K562 (cell line): ENCODE measurements at regions of chr6 and their contacts with region 1.

Region 1: DNA sequence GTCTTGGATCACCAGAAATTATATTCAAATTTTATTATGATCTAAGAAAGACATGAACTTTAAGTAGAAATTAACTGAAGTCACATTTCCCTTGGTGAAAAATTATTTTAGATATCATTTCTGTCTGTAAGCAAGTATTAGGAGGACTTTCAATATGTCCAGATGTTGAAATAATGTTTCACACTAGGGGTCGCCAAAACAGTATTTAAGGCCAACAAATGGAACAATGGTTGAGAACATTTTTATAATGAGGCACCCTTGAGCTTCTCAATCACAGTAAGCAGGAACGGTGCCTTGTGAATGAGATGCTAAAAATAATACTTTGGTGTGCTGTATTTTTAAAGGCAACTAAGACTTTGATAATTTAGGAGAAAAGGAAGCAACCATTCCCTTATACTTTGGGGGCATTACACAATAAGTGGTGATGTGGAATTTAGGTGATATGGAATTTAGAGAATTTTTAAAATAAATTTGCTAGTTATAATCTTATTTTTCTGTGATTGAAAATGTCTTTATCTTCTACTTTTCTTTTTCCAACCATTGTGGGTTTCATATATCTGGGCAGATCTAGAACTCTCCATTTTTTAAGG is 9.6 kb upstream of the SF3B5 start:
- DNase-seq: peak; percentile 31 to 82 (median 56)
- ATAC-seq: peak; percentile 91
- H3K4me3 ChIP-seq: no peak overlapping the region
- H3K27ac ChIP-seq: no peak overlapping the region
- H3K4me1 ChIP-seq: no peaks in the 10 kb centered on the region
- H3K27me3 ChIP-seq: peaks cover 0 to 2% of the 10 kb centered on the region in 2 experiments; a peak in 1 of 5 replicates
- CTCF ChIP-seq: peak; percentile 66 to 89 (median 70)
- EP300 ChIP-seq: no peak
- POLR2A ChIP-seq: no peak
- RAD21 ChIP-seq: peak; percentile 96 to 98

Region 2: GRCh38 chr6:143965503-143966171 is 139.4 kb before region 1 on chr6:
- CTCF ChIA-PET with region 1: no interaction called
- POLR2A ChIA-PET with region 1: no interaction called
- in situ Hi-C with region 1: no loop called
- intact Hi-C with region 1: no loop called
- DNase-seq: no peak
- ATAC-seq: no peak
- H3K4me3 ChIP-seq: no peak overlapping the region
- H3K27ac ChIP-seq: peak overlapping the region; percentile 26; the same call in 1 of the 3 replicates
- H3K4me1 ChIP-seq: peaks cover 0 to 19% of the 10 kb centered on the region in 2 experiments; a peak in 4 of 5 replicates
- H3K27me3 ChIP-seq: no peaks in the 10 kb centered on the region
- CTCF ChIP-seq: no peak
- EP300 ChIP-seq: no peak
- POLR2A ChIP-seq: no peak
- RAD21 ChIP-seq: no peak

Region 3: DNA sequence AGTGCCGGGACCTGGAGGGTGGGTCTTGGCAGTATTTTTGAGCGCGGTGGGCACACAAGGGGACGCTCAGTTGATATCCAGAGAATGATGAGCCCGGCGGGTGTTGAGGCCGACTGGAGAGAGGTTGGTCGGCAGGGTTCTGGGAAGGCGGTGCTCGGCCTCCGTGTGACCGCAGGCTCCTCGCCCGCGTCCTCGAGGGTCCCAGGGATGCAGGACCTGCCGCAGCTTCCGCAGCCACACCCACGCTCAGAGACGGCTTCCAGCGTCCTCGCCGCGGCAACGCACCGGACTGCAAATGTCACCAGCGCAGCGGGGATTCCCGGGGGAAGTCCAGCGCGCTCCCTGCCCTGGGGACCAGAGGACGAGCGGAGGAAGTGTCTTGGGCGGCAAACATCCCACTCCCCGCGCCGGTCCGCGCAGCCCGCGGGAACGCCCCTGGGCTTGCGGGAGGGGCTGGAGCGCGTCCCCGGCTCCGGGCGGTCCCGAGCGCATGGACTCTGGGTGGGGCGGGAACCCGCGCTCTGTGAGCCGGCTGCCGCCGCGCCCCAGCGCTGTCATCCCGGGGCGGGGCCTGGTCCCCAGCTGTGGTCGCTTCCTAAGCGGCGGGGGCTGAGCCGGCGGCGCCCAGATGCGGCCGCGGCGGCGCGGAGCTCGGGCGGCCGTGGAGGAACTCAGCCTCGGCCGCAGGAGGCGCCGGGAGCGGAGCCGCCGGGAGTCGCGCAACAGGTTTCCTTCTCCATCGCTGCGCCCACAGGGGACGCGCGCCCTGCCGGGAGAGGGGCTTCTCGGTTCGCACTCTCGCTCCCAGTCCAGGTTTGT is 45.1 kb after region 1 on chr6 and contains the start of gene STX11:
- CTCF ChIA-PET with region 1: no interaction called
- POLR2A ChIA-PET with region 1: no interaction called
- in situ Hi-C with region 1: no loop called
- intact Hi-C with region 1: loop called (anchors 2 kb)
- DNase-seq: peak; percentile 82 to 89 (median 84)
- ATAC-seq: peak; percentile 98
- H3K4me3 ChIP-seq: peak within 1 kb of the TSS; percentile 51
- H3K27ac ChIP-seq: no peak within 1 kb of the TSS
- H3K4me1 ChIP-seq: peaks cover 7 to 16% of the 10 kb centered on the region in 2 experiments; a peak in 4 of 5 replicates
- H3K27me3 ChIP-seq: peaks cover 17 to 29% of the 10 kb centered on the region in 2 experiments
- CTCF ChIP-seq: peak in 1 of 3 experiments; percentile 16; a peak in 1 of 6 replicates
- EP300 ChIP-seq: no peak
- POLR2A ChIP-seq: no peak
- RAD21 ChIP-seq: no peak
- polyA plus RNA-seq, gene STX11: 0.06 to 0.07 TPM

Region 4: DNA sequence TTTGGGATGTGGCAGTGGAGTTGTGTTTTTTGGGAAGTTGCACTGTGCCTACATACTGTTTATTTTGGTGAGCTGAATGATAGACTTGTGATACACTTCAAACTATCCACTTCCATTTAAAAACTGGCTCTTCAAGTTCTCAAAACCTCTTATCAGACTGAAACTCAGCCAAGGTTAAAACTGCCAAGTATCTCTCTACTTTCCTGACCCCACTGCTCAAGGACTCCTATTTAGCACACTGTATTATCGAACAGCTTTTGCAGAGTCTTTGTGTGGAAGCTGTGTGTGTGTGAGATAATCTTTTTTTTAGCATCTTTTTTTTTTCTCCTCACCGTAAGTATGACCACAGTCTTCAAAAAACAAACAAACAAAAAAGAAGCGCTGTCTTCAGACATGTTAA is 66.4 kb after region 1 on chr6:
- CTCF ChIA-PET with region 1: no interaction called
- POLR2A ChIA-PET with region 1: no interaction called
- in situ Hi-C with region 1: no loop called
- intact Hi-C with region 1: no loop called
- DNase-seq: peak in 1 of 4 experiments; percentile 22
- ATAC-seq: no peak
- H3K4me3 ChIP-seq: no peak overlapping the region
- H3K27ac ChIP-seq: no peak overlapping the region
- H3K4me1 ChIP-seq: peaks cover 0 to 4% of the 10 kb centered on the region in 2 experiments; a peak in 2 of 5 replicates
- H3K27me3 ChIP-seq: peaks cover 3 to 9% of the 10 kb centered on the region in 2 experiments; a peak in 1 of 5 replicates
- CTCF ChIP-seq: no peak
- EP300 ChIP-seq: no peak
- POLR2A ChIP-seq: no peak
- RAD21 ChIP-seq: no peak

Region 5: DNA sequence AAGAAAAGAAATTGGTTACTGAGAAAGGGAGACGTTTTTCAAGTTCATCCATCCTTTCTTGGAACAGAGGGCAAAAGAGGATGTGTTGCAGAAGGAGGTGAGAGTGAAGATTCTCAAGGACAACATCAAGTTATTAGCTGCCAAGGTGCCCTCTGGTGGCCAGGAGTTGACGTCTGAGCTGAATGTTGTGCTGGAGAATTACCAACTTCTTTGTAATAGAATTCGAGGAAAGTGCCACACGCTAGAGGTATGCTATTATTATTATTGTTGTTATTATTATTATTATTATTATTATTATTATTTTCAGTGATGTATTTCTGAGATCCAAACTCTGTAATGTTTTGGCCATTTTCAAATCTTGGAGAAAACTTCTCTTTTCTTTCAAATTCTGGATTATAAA is 377.1 kb after region 1 on chr6:
- CTCF ChIA-PET with region 1: interaction called, 7 read pairs
- POLR2A ChIA-PET with region 1: no interaction called
- in situ Hi-C with region 1: loop called (anchors 10 kb)
- intact Hi-C with region 1: loop called (anchors 1 kb)
- DNase-seq: peak; percentile 25 to 78 (median 40)
- ATAC-seq: peak; percentile 85
- H3K4me3 ChIP-seq: no peak overlapping the region
- H3K27ac ChIP-seq: no peak overlapping the region
- H3K4me1 ChIP-seq: no peaks in the 10 kb centered on the region
- H3K27me3 ChIP-seq: no peaks in the 10 kb centered on the region
- CTCF ChIP-seq: peak; percentile 61 to 73 (median 68)
- EP300 ChIP-seq: no peak
- POLR2A ChIP-seq: no peak
- RAD21 ChIP-seq: peak; percentile 78 to 80

Region 6: DNA sequence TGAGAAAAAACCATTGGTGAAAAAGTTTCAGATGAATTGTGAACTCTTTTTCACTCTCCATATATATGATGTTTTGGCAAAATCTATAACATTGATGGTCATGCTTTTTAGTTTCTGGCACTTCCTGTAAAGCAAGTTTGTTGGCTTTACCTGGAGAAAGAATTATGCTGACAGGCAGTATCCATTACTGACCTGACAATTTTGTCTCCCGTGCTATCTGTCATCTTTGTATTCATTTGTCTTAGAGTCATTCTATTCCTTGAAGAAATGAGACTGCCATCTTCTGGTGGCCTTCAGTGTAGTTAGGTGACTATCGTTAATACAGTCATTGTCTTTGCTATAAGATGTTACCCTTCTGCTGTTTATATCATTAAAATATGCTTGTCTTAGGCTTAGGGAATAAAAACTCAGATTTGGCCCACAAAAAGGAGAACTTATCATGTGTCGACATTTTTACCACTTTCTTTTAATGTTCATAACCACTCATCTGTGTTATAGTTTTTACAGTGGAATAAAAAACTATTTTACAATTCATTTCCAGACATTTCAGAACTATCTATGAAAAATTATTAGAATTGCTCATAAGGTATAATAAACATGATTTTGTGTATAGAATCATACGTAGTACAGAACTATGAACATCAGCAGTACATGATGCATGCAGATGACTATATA is 923.3 kb after region 1 on chr6:
- CTCF ChIA-PET with region 1: no interaction called
- POLR2A ChIA-PET with region 1: no interaction called
- in situ Hi-C with region 1: no loop called
- intact Hi-C with region 1: loop called (anchors 5 kb)
- DNase-seq: peak in 2 of 4 experiments; percentile 21 to 59
- ATAC-seq: peak; percentile 82
- H3K4me3 ChIP-seq: no peak overlapping the region
- H3K27ac ChIP-seq: no peak overlapping the region
- H3K4me1 ChIP-seq: no peaks in the 10 kb centered on the region
- H3K27me3 ChIP-seq: no peaks in the 10 kb centered on the region
- CTCF ChIP-seq: peak in 2 of 3 experiments; percentile 37 to 56; a peak in 3 of 6 replicates
- EP300 ChIP-seq: no peak
- POLR2A ChIP-seq: no peak
- RAD21 ChIP-seq: peak; percentile 83 to 85

Region 7: GRCh38 chr6:145633981-145634627 is 1529.1 kb after region 1 on chr6:
- CTCF ChIA-PET with region 1: interaction called, 4 read pairs
- POLR2A ChIA-PET with region 1: no interaction called
- in situ Hi-C with region 1: no loop called
- intact Hi-C with region 1: loop called (anchors 5 kb)
- DNase-seq: peak; percentile 76 to 88 (median 82)
- ATAC-seq: peak; percentile 99
- H3K4me3 ChIP-seq: no peak overlapping the region
- H3K27ac ChIP-seq: no peak overlapping the region
- H3K4me1 ChIP-seq: no peaks in the 10 kb centered on the region
- H3K27me3 ChIP-seq: no peaks in the 10 kb centered on the region; a peak in 1 of 5 replicates
- CTCF ChIP-seq: peak; percentile 83 to 90 (median 85)
- EP300 ChIP-seq: no peak
- POLR2A ChIP-seq: no peak
- RAD21 ChIP-seq: peak; percentile 61 to 81